ENCODE measurements at regions of chr11 and their contacts with region 1.

Region 1: DNA sequence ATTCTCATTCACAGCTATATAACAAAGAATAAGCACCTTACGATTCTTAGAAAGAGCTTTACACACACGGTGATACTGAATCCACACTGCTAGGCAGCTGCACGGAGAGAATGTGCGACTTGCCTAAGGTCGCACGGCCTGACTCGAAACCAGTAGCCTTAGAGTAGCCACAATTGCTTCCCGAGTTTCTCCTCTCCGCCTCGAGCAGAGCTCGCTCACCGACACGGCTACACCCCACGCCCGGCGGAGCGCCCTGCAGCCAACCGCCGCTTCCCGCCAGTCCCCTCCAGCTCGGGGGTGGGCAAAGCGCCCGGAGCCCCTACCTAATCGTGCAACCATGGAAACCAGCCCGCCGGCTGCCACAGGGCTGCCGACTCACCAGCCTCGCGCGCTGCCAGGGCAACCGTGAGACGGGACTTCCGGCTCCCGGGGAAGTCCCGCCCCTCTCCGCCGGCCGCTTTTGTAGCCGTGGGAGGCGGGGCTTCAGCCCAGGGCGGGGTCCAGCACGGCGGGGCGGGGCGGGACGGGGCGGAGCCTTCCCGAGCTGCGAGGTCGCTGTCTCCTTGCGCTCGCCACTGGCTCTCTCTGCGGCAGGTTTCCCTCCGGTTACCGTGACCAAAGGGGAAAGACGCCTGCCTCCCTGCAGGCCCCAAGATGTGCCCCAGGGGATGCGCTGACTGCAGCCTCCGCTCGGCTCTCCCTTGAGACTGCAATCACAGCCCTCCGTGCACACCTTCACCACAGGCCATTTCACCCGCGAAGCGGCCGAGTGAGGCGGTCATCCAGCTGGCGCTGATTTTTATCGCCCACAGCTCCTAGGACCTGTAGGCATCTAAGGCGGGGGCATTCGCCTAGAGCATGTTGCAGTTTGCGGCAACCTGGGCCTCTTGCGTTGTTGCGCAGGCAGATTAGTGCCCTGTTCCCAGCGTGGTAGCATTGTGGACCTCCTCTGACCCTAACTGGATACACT is 1.1 kb downstream of the BSCL2 start:
- DNase-seq: peak; percentile 95
- ATAC-seq: peak; percentile 73
- H3K4me3 ChIP-seq: peak overlapping the region; percentile 65 to 86 (median 69)
- H3K4me3 Mint-ChIP-seq: peak overlapping the region; percentile 92
- H3K27ac ChIP-seq: peak overlapping the region; percentile 61 to 91
- H3K27ac Mint-ChIP-seq: peak overlapping the region; percentile 91
- H3K4me1 ChIP-seq: peaks cover 39 to 50% of the 10 kb centered on the region in 2 donors
- H3K4me1 Mint-ChIP-seq: peaks cover 51% of the 10 kb centered on the region
- H3K27me3 ChIP-seq: no peaks in the 10 kb centered on the region
- H3K27me3 Mint-ChIP-seq: no peaks in the 10 kb centered on the region
- CTCF ChIP-seq: no peak

Region 2: DNA sequence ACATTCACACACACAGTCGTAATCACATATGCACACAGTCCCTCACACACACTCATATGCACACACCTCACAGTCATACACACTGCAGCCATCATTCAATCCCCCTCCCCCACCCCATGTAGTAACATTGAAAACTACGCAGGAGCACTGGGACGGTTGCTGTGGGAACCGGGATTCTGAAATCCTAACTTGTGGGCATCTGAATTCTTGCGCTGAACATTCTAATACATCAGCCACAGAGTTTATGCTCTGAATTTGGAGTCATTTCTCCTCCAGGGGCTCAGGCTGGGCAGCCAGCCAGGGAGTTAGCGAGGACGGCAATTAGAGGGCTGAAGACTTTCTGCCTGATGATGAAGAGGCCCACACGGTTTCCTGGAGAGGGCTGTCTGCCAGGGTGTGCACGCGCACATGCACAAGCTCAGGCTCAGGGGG is 1702.0 kb before region 1 on chr11:
- CTCF ChIA-PET with region 1: no interaction called
- POLR2A ChIA-PET with region 1: no interaction called
- intact Hi-C with region 1: no loop called
- DNase-seq: no peak
- ATAC-seq: no peak
- H3K4me3 ChIP-seq: no peak overlapping the region
- H3K4me3 Mint-ChIP-seq: no peak overlapping the region
- H3K27ac ChIP-seq: no peak overlapping the region
- H3K27ac Mint-ChIP-seq: no peak overlapping the region
- H3K4me1 ChIP-seq: peaks cover 13 to 16% of the 10 kb centered on the region in 2 donors
- H3K4me1 Mint-ChIP-seq: peaks cover 19% of the 10 kb centered on the region
- H3K27me3 ChIP-seq: peaks cover 0 to 18% (median 6%) of the 10 kb centered on the region in 4 experiments
- H3K27me3 Mint-ChIP-seq: peaks cover 11% of the 10 kb centered on the region
- CTCF ChIP-seq: no peak

Region 3: DNA sequence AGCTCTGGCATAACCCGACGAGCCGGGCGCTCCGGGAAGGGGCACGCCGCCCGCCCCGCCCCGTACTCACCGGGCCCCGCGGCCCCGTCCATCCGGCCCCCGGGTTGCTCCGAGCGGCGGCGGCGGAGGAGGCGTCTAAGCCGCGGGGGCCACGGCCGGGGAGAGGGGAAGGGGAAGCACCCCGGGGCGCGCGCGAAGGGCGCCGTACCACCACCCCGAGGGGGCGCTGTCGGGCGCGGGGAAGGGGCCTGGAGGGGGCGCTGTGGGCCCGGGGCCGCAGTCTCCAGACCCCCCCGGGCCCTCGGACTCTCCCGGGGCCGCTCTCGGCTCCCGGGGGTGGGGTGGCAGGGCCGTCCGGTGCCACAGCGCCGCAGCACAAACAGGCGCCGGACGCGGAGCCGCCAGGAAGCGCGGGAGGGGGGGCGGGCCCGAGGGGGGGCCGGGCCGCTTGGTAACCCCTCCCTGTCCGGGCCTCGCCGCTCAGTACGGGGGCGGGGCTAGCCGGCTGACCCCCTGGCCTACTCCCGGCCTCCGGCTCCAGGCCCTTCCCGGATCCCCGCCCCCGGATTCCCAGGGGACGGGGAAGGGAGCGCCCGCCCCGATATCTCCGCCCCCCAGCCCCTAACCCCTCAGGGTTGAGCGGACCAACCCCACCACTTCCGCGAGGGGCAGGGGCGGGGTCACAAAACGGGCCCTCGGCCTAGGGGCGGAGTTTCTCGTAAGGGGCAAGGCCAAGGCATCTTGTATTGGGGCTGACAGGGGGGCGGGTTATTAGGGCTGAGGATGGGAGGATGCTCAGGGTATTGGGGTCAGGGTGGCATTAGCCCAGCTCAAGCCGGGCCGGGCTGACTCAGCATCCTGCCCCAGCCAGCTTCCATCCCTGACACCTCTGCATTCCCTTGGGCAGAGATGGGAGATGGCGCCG is 93.5 kb before region 1 on chr11 and contains the starts of genes EML3 and ROM1:
- CTCF ChIA-PET with region 1: no interaction called
- POLR2A ChIA-PET with region 1: no interaction called
- intact Hi-C with region 1: loop called (anchors 1 kb)
- DNase-seq: peak; percentile 92
- ATAC-seq: peak; percentile 79
- H3K4me3 ChIP-seq: peak within 1 kb of the TSS; percentile 70 to 84 (median 75)
- H3K4me3 Mint-ChIP-seq: peak within 1 kb of the TSS; percentile 97
- H3K27ac ChIP-seq: peak within 1 kb of the TSS; percentile 76 to 96
- H3K27ac Mint-ChIP-seq: peak within 1 kb of the TSS; percentile 99
- H3K4me1 ChIP-seq: peaks cover 10 to 25% of the 10 kb centered on the region in 2 donors
- H3K4me1 Mint-ChIP-seq: peaks cover 25% of the 10 kb centered on the region
- H3K27me3 ChIP-seq: no peaks in the 10 kb centered on the region
- H3K27me3 Mint-ChIP-seq: no peaks in the 10 kb centered on the region
- CTCF ChIP-seq: peak; percentile 99
- total RNA-seq, gene EML3: 127 and 135 TPM in 2 replicates
- total RNA-seq, gene ROM1: 0.68 and 2.0 TPM in 2 replicates

Region 4: GRCh38 chr11:62652161-62653006 is 53.8 kb before region 1 on chr11:
- CTCF ChIA-PET with region 1: no interaction called
- POLR2A ChIA-PET with region 1: interaction called, 4 read pairs
- intact Hi-C with region 1: loop called (anchors 1 kb)
- DNase-seq: no peak
- ATAC-seq: no peak
- H3K4me3 ChIP-seq: peak overlapping the region; percentile 74 to 90 (median 83)
- H3K4me3 Mint-ChIP-seq: peak overlapping the region; percentile 94
- H3K27ac ChIP-seq: peak overlapping the region; percentile 68 to 89
- H3K27ac Mint-ChIP-seq: peak overlapping the region; percentile 97
- H3K4me1 ChIP-seq: peaks cover 14 to 18% of the 10 kb centered on the region in 2 donors
- H3K4me1 Mint-ChIP-seq: peaks cover 22% of the 10 kb centered on the region
- H3K27me3 ChIP-seq: no peaks in the 10 kb centered on the region
- H3K27me3 Mint-ChIP-seq: no peaks in the 10 kb centered on the region
- CTCF ChIP-seq: no peak

Region 5: DNA sequence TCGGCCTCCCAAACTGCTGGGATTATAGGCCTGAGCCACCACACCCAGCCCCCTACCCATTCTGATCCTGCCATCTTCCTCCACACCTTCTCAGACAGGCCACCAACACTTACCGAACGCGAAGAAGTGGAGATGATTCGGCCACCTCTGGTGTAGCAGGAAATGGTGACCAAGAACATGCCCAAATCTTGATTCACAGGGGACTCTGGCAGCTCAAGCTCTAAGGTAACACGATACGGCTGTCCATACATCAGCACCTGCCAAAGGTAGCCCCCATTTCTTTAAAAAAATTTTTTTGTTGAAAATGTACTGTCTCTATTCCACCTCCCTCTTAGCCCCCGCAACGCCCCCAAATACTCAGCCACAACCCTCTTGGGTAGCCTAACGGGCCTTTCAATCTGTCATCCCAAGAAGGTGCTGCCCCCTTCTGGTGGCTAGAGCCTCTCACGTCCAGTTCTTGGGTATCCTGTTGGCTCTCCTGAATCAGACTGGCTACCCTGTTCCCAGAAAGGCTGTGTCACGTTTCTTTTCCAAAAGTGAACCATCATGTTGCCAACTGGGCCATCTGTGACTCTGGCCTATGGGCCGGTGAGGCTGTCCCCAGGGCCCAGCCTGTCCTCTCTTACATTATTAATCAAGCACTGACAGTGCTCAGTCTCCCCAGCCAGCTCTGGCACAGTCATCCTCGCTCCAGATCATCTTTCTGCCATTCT is 11.6 kb before region 1 on chr11:
- CTCF ChIA-PET with region 1: interaction called, 13 read pairs
- POLR2A ChIA-PET with region 1: interaction called, 5 read pairs
- intact Hi-C with region 1: no loop called
- DNase-seq: peak; percentile 85
- ATAC-seq: peak; percentile 71
- H3K4me3 ChIP-seq: no peak overlapping the region
- H3K4me3 Mint-ChIP-seq: no peak overlapping the region
- H3K27ac ChIP-seq: no peak overlapping the region
- H3K27ac Mint-ChIP-seq: no peak overlapping the region
- H3K4me1 ChIP-seq: peaks cover 0 to 6% of the 10 kb centered on the region in 2 donors
- H3K4me1 Mint-ChIP-seq: peaks cover 5% of the 10 kb centered on the region
- H3K27me3 ChIP-seq: no peaks in the 10 kb centered on the region
- H3K27me3 Mint-ChIP-seq: no peaks in the 10 kb centered on the region
- CTCF ChIP-seq: peak; percentile 87

Region 6: GRCh38 chr11:62719302-62719978 is 13.3 kb after region 1 on chr11:
- CTCF ChIA-PET with region 1: no interaction called
- POLR2A ChIA-PET with region 1: no interaction called
- intact Hi-C with region 1: no loop called
- DNase-seq: no peak
- ATAC-seq: no peak
- H3K4me3 ChIP-seq: no peak overlapping the region
- H3K4me3 Mint-ChIP-seq: no peak overlapping the region
- H3K27ac ChIP-seq: no peak overlapping the region
- H3K27ac Mint-ChIP-seq: no peak overlapping the region
- H3K4me1 ChIP-seq: peaks cover 8 to 11% of the 10 kb centered on the region in 2 donors
- H3K4me1 Mint-ChIP-seq: peaks cover 27% of the 10 kb centered on the region
- H3K27me3 ChIP-seq: no peaks in the 10 kb centered on the region
- H3K27me3 Mint-ChIP-seq: no peaks in the 10 kb centered on the region
- CTCF ChIP-seq: no peak

Region 7: GRCh38 chr11:62787005-62787759 is 81.0 kb after region 1 on chr11 and contains the start of gene TMEM179B:
- CTCF ChIA-PET with region 1: interaction called, 7 read pairs
- POLR2A ChIA-PET with region 1: interaction called, 4 read pairs
- intact Hi-C with region 1: loop called (anchors 2 kb)
- DNase-seq: peak; percentile 98
- ATAC-seq: peak; percentile 70
- H3K4me3 ChIP-seq: peak within 1 kb of the TSS; percentile 87 to 97 (median 94)
- H3K4me3 Mint-ChIP-seq: peak within 1 kb of the TSS; percentile 97
- H3K27ac ChIP-seq: peak within 1 kb of the TSS; percentile 68 to 78
- H3K27ac Mint-ChIP-seq: peak within 1 kb of the TSS; percentile 96
- H3K4me1 ChIP-seq: peaks cover 27 to 35% of the 10 kb centered on the region in 2 donors
- H3K4me1 Mint-ChIP-seq: peaks cover 48% of the 10 kb centered on the region
- H3K27me3 ChIP-seq: no peaks in the 10 kb centered on the region
- H3K27me3 Mint-ChIP-seq: no peaks in the 10 kb centered on the region
- CTCF ChIP-seq: peak; percentile 65
- total RNA-seq, gene TMEM179B: 62.3 and 71.5 TPM in 2 replicates

Region 8: DNA sequence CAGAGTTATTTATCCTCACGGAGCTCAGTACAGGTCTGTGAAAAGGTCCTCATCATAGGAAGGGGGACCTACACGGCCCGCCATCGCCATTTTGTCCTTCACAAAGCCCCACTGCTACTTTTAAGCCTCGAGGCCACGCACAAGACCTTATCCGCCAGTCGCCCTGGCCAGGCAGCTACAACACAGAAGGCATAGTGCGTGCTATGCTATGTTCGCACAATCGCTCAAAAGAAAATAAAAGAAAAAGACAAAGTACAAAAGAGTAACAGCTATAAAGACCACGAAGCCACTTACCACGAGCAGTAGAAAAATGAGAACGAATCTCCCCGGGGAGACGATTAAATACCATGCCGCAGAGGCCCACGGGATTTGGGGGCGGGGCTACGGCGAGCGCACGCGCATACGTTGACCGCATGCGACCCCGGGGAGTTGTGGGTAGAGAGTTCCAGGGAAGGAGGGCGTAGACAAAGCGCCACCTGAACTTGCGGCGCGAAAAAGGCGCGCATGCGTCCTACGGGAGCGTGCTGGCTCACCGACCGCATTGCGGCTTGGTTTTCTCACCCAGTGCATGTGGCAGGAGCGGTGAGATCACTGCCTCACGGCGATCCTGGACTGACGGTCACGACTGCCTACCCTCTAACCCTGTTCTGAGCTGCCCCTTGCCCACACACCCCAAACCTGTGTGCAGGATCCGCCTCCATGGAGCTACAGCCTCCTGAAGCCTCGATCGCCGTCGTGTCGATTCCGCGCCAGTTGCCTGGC is 149.6 kb after region 1 on chr11:
- CTCF ChIA-PET with region 1: no interaction called
- POLR2A ChIA-PET with region 1: interaction called, 11 read pairs
- intact Hi-C with region 1: loop called (anchors 5 kb)
- DNase-seq: peak; percentile 99
- ATAC-seq: peak; percentile 92
- H3K4me3 ChIP-seq: peak overlapping the region; percentile 68 to 100 (median 99)
- H3K4me3 Mint-ChIP-seq: peak overlapping the region; percentile 99
- H3K27ac ChIP-seq: peak overlapping the region; percentile 65 to 84
- H3K27ac Mint-ChIP-seq: peak overlapping the region; percentile 98
- H3K4me1 ChIP-seq: peaks cover 39 to 58% of the 10 kb centered on the region in 2 donors
- H3K4me1 Mint-ChIP-seq: peaks cover 60% of the 10 kb centered on the region
- H3K27me3 ChIP-seq: no peaks in the 10 kb centered on the region
- H3K27me3 Mint-ChIP-seq: no peaks in the 10 kb centered on the region
- CTCF ChIP-seq: no peak